WTC11 (cell line): ENCODE measurements at regions of chr5 and their contacts with region 1.

Region 1: DNA sequence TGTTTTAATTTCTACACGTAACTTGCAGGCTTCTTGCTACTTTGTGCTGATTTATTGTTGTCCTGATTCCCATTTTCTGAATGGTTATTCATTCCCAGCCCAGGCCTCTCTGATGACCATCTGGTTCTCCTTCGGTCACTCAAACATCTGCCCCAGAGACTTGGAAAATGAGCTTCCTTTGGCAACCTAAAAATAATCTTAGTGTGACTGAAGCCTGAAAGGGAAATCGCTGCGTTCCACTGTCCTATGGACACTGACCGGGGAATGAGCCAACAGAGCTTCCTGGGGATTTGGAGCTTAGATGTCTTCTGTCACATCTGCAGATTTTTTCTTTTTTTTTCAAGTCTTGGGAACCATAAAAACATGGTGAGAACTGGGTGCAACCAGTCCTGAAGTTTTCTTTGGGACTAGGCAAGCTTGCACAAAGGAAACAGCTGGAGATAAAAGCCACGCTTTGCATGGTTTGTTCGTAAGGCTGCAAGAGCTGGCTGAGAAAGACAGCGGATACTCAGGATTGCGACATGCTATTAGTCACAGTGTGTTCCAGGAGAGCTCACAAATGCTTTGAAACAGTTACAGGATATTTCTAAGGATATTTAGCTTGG is 146.3 kb downstream of the GOLPH3 start:
- DNase-seq: no peak
- ATAC-seq: peak; percentile 75
- H3K4me3 Mint-ChIP-seq: no peak overlapping the region
- H3K27ac Mint-ChIP-seq: peak overlapping the region; percentile 85
- H3K4me1 Mint-ChIP-seq: peaks cover 34% of the 10 kb centered on the region
- H3K27me3 Mint-ChIP-seq: no peaks in the 10 kb centered on the region; the same call in 1 of the 2 replicates
- CTCF ChIP-seq: no peak

Region 2: GRCh38 chr5:31800351-31800750 is 227.5 kb before region 1 on chr5:
- CTCF ChIA-PET with region 1: no interaction called
- POLR2A ChIA-PET with region 1: interaction called, 14 read pairs
- DNase-seq: no peak
- ATAC-seq: no peak
- H3K4me3 Mint-ChIP-seq: no peak overlapping the region
- H3K27ac Mint-ChIP-seq: no peak overlapping the region
- H3K4me1 Mint-ChIP-seq: peaks cover 8% of the 10 kb centered on the region; the same call in 1 of the 2 replicates
- H3K27me3 Mint-ChIP-seq: no peaks in the 10 kb centered on the region
- CTCF ChIP-seq: no peak

Region 3: DNA sequence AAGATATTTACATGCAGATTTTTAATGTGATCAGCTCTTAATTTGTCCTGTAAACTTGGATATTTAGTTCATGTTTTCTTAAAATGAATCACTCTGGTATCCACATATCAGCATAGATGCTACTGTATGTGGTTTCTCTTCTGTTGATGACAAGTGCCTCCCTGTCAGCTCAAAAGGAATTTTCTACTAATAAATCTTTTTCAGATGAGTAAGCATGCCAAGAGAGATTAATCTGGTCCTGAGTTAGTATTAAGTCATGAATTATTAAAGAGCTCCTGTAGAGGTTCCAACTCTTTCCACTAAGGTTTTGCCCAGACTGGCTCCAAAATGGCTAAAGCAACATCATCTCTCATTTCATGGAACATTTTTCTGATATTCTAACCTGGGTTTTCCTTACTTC is 17.1 kb after region 1 on chr5:
- CTCF ChIA-PET with region 1: no interaction called
- POLR2A ChIA-PET with region 1: no interaction called
- DNase-seq: no peak
- ATAC-seq: no peak
- H3K4me3 Mint-ChIP-seq: no peak overlapping the region
- H3K27ac Mint-ChIP-seq: no peak overlapping the region
- H3K4me1 Mint-ChIP-seq: peaks cover 10% of the 10 kb centered on the region
- H3K27me3 Mint-ChIP-seq: no peaks in the 10 kb centered on the region
- CTCF ChIP-seq: no peak